ENCODE measurements at regions of chr9 and their contacts with region 1.

Region 1: DNA sequence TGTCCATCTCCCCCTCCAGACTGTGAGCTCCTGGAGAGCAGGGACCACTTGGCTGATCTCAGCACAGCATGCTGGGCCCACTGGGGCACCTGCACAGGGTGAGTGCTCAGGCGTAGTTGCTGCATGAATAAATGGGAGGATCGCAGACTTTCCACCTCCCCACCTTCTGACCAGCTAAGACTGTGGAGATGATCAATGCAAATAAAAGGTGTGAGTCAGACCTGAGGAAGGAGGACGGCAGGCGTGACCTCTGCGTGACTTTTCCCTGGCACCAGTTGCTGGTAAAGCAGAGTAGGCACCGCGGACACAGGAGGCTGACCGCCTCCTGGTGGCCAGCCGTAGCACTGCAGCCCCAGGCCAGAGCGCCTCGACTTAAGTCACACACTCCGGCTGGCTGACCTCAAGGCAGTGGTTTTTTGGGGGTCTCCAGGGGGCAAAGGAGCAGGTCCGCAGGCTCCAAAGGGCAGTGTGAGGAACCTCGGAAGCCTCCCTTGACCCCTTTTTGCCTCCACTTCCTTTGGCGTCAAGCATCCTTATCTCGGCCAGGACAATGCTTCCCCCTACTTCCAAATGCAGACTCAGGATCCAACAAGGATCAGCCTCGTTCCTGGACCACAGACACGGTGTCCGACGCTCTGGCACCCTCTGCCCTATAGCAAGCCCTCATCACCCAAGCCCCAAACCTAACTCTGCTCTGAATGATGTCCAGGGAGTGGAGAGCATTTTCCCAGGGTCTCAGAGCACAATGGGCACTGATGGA is 12.7 kb upstream of the TDRD7 start:
- DNase-seq: peak; percentile 52
- H3K4me3 Mint-ChIP-seq: no peak overlapping the region
- H3K27ac Mint-ChIP-seq: peak overlapping the region; percentile 53
- H3K4me1 Mint-ChIP-seq: peaks cover 29% of the 10 kb centered on the region
- H3K27me3 Mint-ChIP-seq: peaks cover 42% of the 10 kb centered on the region

Region 2: GRCh38 chr9:96777426-96777864 is 621.7 kb before region 1 on chr9:
- intact Hi-C with region 1: loop called (anchors 5 kb)
- DNase-seq: no peak
- H3K4me3 Mint-ChIP-seq: peak overlapping the region; percentile 100
- H3K27ac Mint-ChIP-seq: peak overlapping the region; percentile 93
- H3K4me1 Mint-ChIP-seq: peaks cover 19% of the 10 kb centered on the region
- H3K27me3 Mint-ChIP-seq: peaks cover 2% of the 10 kb centered on the region

Region 3: GRCh38 chr9:97220894-97221477 is 178.2 kb before region 1 on chr9:
- intact Hi-C with region 1: no loop called
- DNase-seq: no peak
- H3K4me3 Mint-ChIP-seq: peak overlapping the region; percentile 70
- H3K27ac Mint-ChIP-seq: peak overlapping the region; percentile 23
- H3K4me1 Mint-ChIP-seq: peaks cover 5% of the 10 kb centered on the region
- H3K27me3 Mint-ChIP-seq: peaks cover 61% of the 10 kb centered on the region

Region 4: DNA sequence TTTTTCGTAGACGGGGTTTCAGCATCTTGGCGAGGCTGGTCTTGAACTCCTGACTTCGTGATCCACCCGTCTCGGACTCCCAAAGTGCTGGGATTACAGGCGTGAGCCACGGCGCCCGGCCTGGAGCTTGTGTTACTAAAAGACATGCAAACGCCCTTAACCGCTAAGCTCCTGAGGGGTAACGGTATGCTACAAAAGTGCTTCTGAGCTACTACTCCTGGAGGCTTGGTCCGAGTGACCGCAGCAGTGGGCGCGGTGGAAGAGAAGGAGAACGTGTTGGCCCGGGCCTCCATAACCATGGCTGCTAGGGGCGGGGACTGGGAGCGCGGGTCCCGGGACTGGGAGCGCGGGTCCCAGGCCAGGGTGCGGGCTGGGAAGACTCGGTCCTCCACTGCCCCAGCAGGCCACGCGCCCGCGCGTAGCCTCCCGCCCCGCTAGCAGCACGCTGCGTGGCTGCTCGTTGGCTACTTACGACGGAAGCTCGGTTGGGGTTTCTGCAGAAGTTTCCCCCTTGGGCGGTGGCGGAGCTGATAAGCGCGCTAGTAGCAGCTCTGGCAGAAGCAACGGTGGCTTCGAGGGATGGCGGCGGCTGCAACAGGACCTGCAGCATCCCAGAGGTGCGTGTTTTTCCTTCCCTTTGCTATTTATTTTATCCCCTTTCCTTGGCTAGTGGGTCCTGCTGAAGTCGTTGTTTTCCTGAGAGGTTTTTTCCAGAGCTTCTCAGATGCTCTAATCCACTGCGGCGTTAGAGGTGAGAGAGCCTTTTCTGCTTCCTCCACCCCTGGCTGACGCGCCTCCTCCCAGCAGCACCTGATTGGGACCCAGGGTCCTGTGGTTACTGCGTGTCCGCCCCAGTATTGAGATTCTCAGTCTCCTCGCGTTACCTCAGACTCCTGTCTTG is 161.0 kb before region 1 on chr9:
- intact Hi-C with region 1: loop called (anchors 5 kb)
- DNase-seq: peak; percentile 67
- H3K4me3 Mint-ChIP-seq: peak overlapping the region; percentile 87
- H3K27ac Mint-ChIP-seq: peak overlapping the region; percentile 92
- H3K4me1 Mint-ChIP-seq: peaks cover 18% of the 10 kb centered on the region
- H3K27me3 Mint-ChIP-seq: peaks cover 17% of the 10 kb centered on the region

Region 5: GRCh38 chr9:97411789-97412625 is 12.8 kb after region 1 on chr9 and contains the start of gene TDRD7:
- intact Hi-C with region 1: loop called (anchors 1 kb)
- DNase-seq: peak; percentile 87
- H3K4me3 Mint-ChIP-seq: peak within 1 kb of the TSS; percentile 84
- H3K27ac Mint-ChIP-seq: peak within 1 kb of the TSS; percentile 61
- H3K4me1 Mint-ChIP-seq: peaks cover 35% of the 10 kb centered on the region
- H3K27me3 Mint-ChIP-seq: peaks cover 34% of the 10 kb centered on the region
- total RNA-seq, gene TDRD7: 4.7 TPM in 2 replicates

Region 6: DNA sequence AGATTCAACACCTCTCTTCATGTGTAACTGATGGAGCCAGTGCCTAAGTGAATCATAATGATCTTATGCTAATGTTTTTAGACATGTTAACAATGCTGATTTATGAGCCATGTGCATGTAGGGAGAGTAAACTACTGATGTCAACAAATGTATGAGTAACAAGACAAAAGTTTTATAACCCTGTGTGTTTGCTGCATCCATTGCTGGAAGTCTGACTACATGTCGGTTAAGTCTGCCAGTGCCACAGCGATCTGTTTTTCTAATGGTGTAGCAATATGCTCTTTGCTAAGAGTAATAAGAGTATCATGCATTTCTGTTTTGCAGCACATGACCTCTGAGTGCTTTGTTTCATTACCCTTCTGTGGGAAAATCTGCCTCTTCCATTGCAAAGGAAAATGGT is 75.9 kb after region 1 on chr9:
- intact Hi-C with region 1: no loop called
- DNase-seq: no peak
- H3K4me3 Mint-ChIP-seq: no peak overlapping the region
- H3K27ac Mint-ChIP-seq: no peak overlapping the region
- H3K4me1 Mint-ChIP-seq: no peaks in the 10 kb centered on the region
- H3K27me3 Mint-ChIP-seq: no peaks in the 10 kb centered on the region

Region 7: GRCh38 chr9:97598461-97599288 is 199.5 kb after region 1 on chr9:
- intact Hi-C with region 1: no loop called
- DNase-seq: peak; percentile 60
- H3K4me3 Mint-ChIP-seq: no peak overlapping the region
- H3K27ac Mint-ChIP-seq: no peak overlapping the region
- H3K4me1 Mint-ChIP-seq: peaks cover 9% of the 10 kb centered on the region
- H3K27me3 Mint-ChIP-seq: no peaks in the 10 kb centered on the region

Region 8: DNA sequence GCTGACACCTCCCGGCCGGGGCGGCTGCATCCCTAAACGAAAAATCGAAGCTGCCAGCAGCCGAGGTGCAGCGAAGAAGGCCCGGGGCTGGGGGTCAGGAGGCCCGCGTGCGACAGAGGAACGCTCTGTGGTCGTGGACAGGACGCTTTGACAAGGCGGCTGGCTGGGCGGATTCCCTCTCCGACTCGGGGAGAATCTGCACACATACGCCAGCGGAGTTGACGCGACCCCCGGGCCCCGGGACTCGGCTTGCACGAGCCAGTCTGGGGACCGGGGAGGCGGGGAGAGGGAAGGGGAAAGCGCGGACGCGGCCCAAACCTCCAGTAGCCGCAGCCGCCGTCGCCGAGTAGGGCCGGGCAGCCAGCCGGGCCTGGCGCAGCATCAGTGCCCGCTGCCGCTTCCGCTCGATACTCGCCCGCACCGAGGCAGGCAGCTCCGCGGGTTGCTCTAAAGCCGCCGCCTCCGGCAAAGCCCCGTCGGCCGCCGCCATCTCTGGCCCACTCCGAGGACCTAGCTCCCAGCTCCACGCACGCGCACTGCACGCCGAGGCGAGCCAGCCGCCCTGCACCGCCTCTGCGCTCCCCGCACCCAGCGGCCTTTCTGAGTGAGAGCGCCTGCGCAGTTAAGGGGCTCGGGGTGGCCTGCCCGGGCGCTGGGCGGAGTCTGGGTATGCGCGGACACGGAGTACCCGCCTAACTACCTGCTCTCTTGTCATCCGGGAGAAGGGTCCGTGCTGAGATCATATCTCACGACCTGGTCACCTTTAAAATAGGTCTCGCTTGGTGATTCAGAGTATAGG is 297.8 kb after region 1 on chr9 and contains the start of gene XPA:
- intact Hi-C with region 1: loop called (anchors 5 kb)
- DNase-seq: peak; percentile 98
- H3K4me3 Mint-ChIP-seq: peak within 1 kb of the TSS; percentile 85
- H3K27ac Mint-ChIP-seq: peak within 1 kb of the TSS; percentile 84
- H3K4me1 Mint-ChIP-seq: peaks cover 54% of the 10 kb centered on the region
- H3K27me3 Mint-ChIP-seq: no peaks in the 10 kb centered on the region
- total RNA-seq, gene XPA: 10.6 and 11.3 TPM in 2 replicates

Measured in activated T-helper 1 cell treated with anti-CD3 and anti-CD28 coated beads, Interleukin-12 subunit alpha, Interleukin-12 subunit beta, Interleukin-2, Interleukin-4 antibody, amounts not matched to agents 30 ng/mL and 10 ng/mL and 1 ng/mL, durations not matched to agents 14 hours and 24 hours and 36 hours (primary cell).